Activated CD4-positive, alpha-beta T cell treated with anti-CD3 and anti-CD28 coated beads for 36 hours (primary cell): ENCODE measurements at regions of chrX and their contacts with region 1.

Region 1: GRCh38 chrX:53403535-53403934 is 18.9 kb downstream of the SMC1A start:
- DNase-seq: no peak
- ATAC-seq: no peak
- H3K4me3 Mint-ChIP-seq: no peak overlapping the region
- H3K27ac Mint-ChIP-seq: no peak overlapping the region
- H3K4me1 Mint-ChIP-seq: no peaks in the 10 kb centered on the region
- H3K27me3 Mint-ChIP-seq: no peaks in the 10 kb centered on the region

Region 2: GRCh38 chrX:53211391-53211978 is 192.1 kb before region 1 on chrX:
- CTCF ChIA-PET with region 1: no interaction called
- POLR2A ChIA-PET with region 1: no interaction called
- intact Hi-C with region 1: loop called in 1 of 2 experiments (anchors 10 kb)
- DNase-seq: no peak
- ATAC-seq: no peak
- H3K4me3 Mint-ChIP-seq: no peak overlapping the region
- H3K27ac Mint-ChIP-seq: no peak overlapping the region
- H3K4me1 Mint-ChIP-seq: no peaks in the 10 kb centered on the region
- H3K27me3 Mint-ChIP-seq: no peaks in the 10 kb centered on the region

Region 3: DNA sequence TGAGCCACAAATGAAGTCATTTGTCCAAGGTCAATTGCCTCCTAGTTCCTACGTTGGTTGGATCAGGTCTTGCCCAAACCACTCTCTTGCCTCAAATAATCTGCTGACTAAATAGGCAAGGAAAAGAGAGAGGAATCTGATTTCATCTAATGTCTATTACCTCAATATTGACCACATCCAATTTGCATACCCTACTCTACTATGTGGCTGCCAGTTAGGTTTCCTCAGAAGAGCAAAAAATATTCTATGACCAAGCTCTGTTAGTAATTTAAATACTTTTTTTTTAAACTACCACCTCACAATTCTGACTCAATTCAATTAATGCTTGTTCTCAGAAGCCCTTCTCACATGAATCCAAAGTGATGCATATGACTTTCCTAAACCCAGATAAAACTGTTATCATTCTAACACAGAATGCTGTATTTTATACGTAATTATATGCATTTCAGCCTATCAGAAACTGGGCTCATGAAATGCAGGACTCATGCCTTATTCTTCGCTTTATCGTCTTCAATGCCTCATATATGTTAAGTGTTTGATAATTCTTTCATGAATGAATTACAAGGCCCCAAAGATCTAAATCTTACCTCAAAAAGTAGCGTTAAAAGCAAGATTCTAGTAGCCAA is 184.4 kb after region 1 on chrX:
- CTCF ChIA-PET with region 1: no interaction called
- POLR2A ChIA-PET with region 1: no interaction called
- intact Hi-C with region 1: loop called in 1 of 2 experiments (anchors 10 kb)
- DNase-seq: no peak
- ATAC-seq: peak; percentile 23
- H3K4me3 Mint-ChIP-seq: no peak overlapping the region
- H3K27ac Mint-ChIP-seq: peak overlapping the region; percentile 42
- H3K4me1 Mint-ChIP-seq: peaks cover 8% of the 10 kb centered on the region
- H3K27me3 Mint-ChIP-seq: no peaks in the 10 kb centered on the region

Region 4: DNA sequence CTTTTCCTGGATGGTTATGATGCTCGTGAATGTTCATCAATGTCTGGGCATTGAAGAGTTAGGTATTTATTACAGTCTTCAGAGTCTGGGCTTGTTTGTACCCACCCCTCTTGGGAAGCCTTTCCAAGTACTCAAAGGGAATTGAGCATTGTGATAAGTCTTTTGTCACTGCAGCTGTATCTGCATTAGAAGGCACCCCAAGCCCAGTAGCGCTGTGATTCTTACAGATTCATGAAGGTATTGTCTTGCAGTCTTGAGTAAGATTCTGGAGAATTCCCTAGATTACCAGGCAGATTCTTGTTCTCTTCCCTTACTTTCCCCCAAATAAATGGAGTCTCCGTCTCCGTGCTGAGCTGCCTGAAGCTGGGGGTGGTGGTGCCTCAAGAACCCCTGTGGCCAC is 456.4 kb after region 1 on chrX:
- CTCF ChIA-PET with region 1: no interaction called
- POLR2A ChIA-PET with region 1: no interaction called
- intact Hi-C with region 1: no loop called
- DNase-seq: no peak
- ATAC-seq: no peak
- H3K4me3 Mint-ChIP-seq: no peak overlapping the region
- H3K27ac Mint-ChIP-seq: no peak overlapping the region
- H3K4me1 Mint-ChIP-seq: no peaks in the 10 kb centered on the region
- H3K27me3 Mint-ChIP-seq: peaks cover 10% of the 10 kb centered on the region